WTC11 (cell line): ENCODE measurements at regions of chr11 and their contacts with region 1.

Region 1: DNA sequence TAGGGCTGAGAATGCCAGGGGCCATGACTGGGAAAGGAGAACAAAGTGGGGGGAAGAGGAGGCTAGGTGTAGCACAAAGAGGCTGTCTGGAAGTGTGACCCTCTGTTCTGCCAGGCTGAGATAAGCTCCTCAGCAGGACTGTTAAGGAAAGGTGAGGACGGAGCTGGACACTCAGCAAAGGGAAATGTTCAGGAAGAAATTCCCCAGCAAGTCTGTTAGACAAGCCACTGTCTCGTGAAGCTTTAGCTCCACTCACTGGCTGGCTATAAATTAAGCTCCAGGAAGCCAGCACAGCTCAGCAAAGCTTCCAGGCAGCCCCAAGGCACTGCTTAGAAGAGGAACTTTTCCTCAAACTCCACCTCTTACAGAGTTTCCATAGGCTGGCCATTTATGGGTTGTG is 181.2 kb upstream of the API5 start:
- DNase-seq: peak; percentile 36
- ATAC-seq: peak; percentile 97
- H3K4me3 Mint-ChIP-seq: no peak overlapping the region
- H3K27ac Mint-ChIP-seq: no peak overlapping the region
- H3K4me1 Mint-ChIP-seq: 0 out of 2 replicates have a peak, but pooled peaks cover 3% of the 10 kb centered on the region
- H3K27me3 Mint-ChIP-seq: no peaks in the 10 kb centered on the region
- CTCF ChIP-seq: no peak

Region 2: DNA sequence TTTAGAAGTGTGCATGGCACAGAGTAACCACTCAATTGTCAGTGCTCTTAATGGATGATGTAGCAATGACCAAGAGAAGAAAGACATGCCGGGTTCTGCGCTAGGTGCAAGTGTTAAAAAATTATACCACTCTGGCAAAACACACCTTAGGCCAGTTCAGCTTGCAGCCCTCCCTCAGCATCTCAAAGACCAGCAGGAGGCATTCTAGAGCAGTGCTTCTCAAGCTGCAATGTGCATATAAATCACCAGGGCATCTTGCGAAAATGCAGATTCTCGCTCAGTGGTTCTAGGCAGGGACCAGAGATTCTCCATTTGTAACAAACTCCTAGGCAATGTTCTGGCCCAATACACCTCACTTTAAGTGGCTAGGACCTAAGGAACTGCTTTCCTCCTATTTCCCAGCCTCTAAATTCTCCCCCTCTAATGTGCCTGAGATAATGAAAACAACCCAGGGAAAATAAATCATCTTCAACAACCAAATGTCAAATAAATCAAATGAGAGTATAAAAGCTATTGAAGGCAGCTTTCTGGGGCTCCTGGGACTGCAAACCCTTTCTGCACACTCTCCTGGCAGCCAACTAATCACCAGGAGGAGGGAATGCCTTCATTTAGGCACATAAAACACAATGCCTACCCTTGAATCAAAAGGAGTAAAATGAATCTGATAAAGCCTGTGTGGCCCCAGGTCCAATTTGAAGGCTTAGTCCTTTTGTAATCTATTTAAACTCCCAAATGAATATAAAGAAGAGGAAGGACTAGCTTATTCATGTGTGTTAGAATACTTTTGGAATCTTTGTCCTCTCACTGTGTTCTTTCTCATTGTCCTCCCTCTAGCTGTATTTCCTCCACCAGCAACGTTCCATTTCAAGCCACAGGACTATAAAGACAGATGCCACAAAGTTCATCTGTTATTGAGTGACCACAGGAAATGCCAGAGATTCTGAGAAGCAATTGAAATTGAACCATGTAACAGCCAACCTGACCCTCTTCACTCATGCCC is 155.8 kb before region 1 on chr11:
- CTCF ChIA-PET with region 1: interaction called, 22 read pairs
- POLR2A ChIA-PET with region 1: no interaction called
- DNase-seq: peak; percentile 32
- ATAC-seq: peak; percentile 88
- H3K4me3 Mint-ChIP-seq: no peak overlapping the region
- H3K27ac Mint-ChIP-seq: no peak overlapping the region
- H3K4me1 Mint-ChIP-seq: peaks cover 23% of the 10 kb centered on the region
- H3K27me3 Mint-ChIP-seq: no peaks in the 10 kb centered on the region
- CTCF ChIP-seq: no peak

Region 3: DNA sequence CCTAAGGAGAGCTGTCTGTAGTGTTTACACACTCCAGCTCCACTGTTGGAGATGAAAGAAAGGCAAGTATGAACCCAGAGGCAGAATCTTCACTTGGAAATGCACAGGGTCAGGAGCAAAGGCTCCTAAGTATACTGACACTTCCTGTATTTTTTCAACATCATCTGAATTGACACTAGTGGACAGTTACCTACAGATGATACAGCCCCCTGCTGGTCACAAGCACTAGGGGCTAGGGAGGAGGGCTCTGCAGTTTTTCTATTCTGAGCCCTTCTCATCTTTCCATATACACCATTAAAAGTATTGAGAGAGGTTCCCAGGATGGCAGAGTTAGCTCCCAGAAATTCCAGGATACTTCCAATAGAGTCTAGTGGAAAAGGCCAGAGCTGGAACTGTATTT is 109.2 kb before region 1 on chr11:
- CTCF ChIA-PET with region 1: interaction called, 17 read pairs
- POLR2A ChIA-PET with region 1: no interaction called
- DNase-seq: peak; percentile 35
- ATAC-seq: peak; percentile 86
- H3K4me3 Mint-ChIP-seq: no peak overlapping the region
- H3K27ac Mint-ChIP-seq: no peak overlapping the region
- H3K4me1 Mint-ChIP-seq: peaks cover 11% of the 10 kb centered on the region
- H3K27me3 Mint-ChIP-seq: no peaks in the 10 kb centered on the region
- CTCF ChIP-seq: peak; percentile 44

Region 4: GRCh38 chr11:43119275-43119960 is 11.2 kb before region 1 on chr11:
- CTCF ChIA-PET with region 1: interaction called, 11 read pairs
- POLR2A ChIA-PET with region 1: no interaction called
- DNase-seq: no peak
- ATAC-seq: no peak
- H3K4me3 Mint-ChIP-seq: no peak overlapping the region
- H3K27ac Mint-ChIP-seq: no peak overlapping the region
- H3K4me1 Mint-ChIP-seq: 0 out of 2 replicates have a peak, but pooled peaks cover 2% of the 10 kb centered on the region
- H3K27me3 Mint-ChIP-seq: no peaks in the 10 kb centered on the region
- CTCF ChIP-seq: no peak